Left cardiac atrium (tissue), 4 donors: ENCODE measurements at regions of chr15 and their contacts with region 1.

Region 1: DNA sequence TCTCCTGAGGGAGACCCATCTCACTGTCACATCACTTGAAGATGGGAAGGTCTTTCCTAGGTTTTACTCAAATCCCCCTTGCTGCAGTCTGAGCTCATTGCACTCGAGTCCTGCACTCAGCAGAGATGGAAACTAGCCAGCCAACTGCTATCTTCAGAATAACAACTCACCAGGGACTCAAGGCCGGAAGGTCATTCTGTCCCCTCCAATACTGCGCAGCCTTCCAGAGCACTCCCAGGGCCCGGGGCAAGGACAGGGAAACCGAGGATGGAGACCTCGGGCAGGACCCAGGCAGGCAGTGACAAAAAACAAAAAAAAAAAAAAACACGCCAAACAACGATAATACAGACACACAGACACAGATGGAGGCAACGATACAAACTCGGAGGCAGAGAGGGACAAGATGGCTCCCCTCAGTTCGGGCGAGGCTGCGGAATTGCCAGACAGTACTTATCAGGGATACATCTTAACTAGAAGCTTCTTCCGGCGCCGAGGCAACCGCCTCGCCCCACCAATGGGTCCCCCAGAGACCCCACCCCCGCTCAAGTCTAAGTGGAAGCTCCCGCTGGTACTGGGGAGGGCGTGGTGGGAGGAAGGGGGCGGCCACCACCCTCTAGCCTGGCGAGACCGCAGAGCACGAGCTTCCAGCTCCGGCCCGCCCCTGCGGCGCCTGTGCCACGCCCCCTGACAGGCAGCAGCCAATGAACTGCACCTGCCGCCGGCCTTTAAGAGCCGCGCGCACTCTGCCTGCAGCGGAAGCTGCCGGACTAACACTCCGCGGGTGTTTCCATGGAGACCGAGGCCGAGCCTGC is 7.0 kb upstream of the MAP1A start:
- DNase-seq: peak; percentile 100
- ATAC-seq: peak; percentile 97 to 99

Region 2: GRCh38 chr15:43134157-43134635 is 376.2 kb before region 1 on chr15:
- intact Hi-C with region 1: no loop called
- DNase-seq: no peak
- ATAC-seq: no peak

Region 3: GRCh38 chr15:43465105-43465504 is 45.3 kb before region 1 on chr15:
- intact Hi-C with region 1: no loop called
- DNase-seq: no peak
- ATAC-seq: no peak

Region 4: GRCh38 chr15:43492673-43493601 is 17.5 kb before region 1 on chr15 and contains the start of gene TP53BP1:
- intact Hi-C with region 1: loop called in 1 of 2 experiments (anchors 1 kb)
- DNase-seq: peak; percentile 99
- ATAC-seq: peak; percentile 100
- total RNA-seq, gene TP53BP1: 30.1 to 33.5 TPM

Region 5: DNA sequence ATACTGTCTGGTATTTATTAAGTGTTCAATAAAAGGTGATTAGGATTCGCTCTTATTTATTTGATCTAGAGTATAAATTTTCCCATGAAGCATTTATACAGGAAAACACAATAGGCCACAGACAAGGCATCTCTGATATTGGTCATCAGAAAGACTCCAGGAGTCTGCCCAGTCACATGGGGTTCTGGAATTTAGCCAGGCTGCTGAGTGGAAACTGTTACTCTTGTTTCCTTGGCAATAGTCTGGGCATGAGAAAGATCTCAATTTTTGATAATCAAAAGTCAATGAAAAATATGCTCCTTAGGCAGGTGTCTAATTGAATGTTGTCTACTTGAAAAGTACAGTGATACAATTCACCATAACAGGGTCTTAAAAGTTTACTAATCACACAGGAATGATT is 523.5 kb after region 1 on chr15:
- intact Hi-C with region 1: no loop called
- DNase-seq: peak; percentile 32
- ATAC-seq: no peak

Region 6: DNA sequence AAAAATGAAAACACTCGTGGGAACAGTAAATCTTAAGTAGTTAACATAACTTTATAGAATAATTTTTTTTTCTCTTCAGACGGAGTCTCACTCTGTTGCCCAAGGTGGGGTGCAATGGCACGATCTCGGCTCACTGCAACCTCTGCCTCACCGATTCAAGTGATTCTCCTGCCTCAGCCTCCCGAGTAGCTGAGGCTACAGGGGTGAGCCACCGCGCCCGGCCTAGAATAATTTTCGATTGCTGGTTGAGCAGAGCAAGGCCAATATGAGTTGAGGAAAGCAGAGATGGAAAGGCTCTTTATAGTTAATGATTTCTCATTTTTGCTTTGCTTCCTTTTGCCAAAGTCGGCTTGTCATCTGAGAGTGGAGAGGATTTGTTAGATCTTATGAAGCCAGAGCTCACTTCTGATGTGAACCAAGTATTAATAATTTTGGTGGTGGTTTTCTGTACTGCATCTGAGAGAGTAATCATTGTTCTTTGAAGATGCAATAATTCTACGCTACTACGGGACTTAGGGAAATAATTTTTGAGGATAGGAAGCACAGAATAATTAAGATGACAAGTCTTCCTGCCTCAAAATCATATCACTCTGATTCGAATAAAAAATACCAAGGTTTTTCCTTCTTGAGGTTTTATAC is 776.5 kb after region 1 on chr15:
- intact Hi-C with region 1: no loop called
- DNase-seq: no peak
- ATAC-seq: no peak